Activated naive CD4-positive, alpha-beta T cell treated with anti-CD3 and anti-CD28 coated beads for 36 hours (primary cell): ENCODE measurements at regions of chr14 and their contacts with region 1.

Region 1: DNA sequence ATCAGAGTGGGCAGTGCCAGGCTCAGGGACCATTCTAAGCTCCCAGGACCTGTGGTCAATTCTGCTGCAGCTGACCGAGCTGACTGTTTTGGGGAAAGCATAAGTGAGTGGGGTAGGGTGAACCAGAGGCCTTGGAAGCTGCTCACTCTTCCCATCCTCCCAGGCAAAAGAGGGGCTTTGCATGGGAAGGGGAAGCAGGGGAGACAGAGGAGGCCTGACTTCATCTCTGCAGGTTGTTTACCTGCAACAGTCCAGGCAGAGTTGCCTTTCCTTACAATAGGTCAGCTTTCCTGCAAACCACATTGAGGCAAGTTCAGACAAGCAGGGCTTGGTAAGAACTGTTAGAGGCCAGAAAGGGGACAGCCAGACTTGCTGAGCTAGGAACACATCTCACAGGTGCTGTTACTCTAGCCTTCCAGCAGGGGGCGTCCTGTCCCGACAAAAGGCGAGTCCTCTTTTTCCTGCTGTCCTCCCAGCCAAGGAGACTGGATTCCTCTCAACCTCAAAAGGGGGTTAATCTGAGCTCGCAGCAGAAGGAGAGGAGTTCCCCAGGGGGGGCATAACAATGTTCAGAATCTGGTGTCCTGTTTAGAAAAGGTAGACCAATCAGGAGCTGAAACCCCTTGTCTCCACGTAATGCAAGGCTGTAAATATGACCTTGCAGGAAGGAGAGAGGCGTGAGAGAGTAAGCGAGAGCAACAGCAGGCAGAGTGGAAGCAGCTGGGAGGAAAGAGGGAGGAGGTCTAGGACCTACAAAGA is 4.3 kb upstream of the DHRS2 start:
- DNase-seq: peak; percentile 82
- H3K4me3 Mint-ChIP-seq: peak overlapping the region; percentile 35
- H3K27ac Mint-ChIP-seq: no peak overlapping the region
- H3K4me1 Mint-ChIP-seq: peaks cover 5% of the 10 kb centered on the region
- H3K27me3 Mint-ChIP-seq: no peaks in the 10 kb centered on the region

Region 2: GRCh38 chr14:22570132-22570949 is 1061.5 kb before region 1 on chr14:
- CTCF ChIA-PET with region 1: no interaction called
- intact Hi-C with region 1: no loop called
- DNase-seq: peak; percentile 93
- H3K4me3 Mint-ChIP-seq: peak overlapping the region; percentile 85
- H3K27ac Mint-ChIP-seq: peak overlapping the region; percentile 97
- H3K4me1 Mint-ChIP-seq: peaks cover 68% of the 10 kb centered on the region
- H3K27me3 Mint-ChIP-seq: no peaks in the 10 kb centered on the region

Region 3: DNA sequence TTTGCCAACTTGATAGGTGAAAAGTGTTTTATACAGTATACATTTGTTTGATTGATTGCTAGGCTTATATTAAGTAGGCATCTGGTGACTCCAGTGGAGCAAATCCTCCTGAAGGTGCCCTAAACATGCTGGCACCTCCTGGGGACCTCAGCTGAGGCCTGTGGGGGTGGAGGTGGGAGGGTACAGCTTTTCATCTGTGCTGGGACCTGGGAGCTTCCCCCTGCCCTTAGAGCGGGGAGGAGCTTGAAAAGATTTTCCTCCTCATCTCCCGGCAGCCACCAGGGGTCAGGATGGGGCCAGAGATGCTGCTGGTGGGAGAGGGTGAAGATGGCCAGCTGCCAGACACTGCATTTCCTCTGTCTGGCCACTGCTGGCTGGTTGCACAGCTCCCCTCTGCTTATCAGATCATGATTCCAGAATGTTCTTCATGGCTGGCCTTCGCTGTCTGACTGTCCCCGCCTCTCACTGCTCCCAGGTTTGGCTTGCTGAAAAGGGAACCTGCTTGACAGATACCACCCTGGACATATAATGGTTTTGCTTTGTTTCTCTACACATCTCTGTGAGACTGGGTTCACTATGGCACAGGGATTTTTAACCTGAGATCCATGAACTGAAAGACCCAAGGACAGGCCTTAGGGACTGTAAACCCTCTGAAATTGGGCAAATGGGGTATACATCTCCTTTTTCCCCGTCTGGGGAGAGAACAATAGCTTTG is 42.8 kb before region 1 on chr14:
- CTCF ChIA-PET with region 1: interaction called, 61 read pairs
- intact Hi-C with region 1: loop called (anchors 1 kb)
- DNase-seq: peak; percentile 91
- H3K4me3 Mint-ChIP-seq: no peak overlapping the region
- H3K27ac Mint-ChIP-seq: no peak overlapping the region
- H3K4me1 Mint-ChIP-seq: peaks cover 3% of the 10 kb centered on the region
- H3K27me3 Mint-ChIP-seq: peaks cover 15% of the 10 kb centered on the region

Region 4: DNA sequence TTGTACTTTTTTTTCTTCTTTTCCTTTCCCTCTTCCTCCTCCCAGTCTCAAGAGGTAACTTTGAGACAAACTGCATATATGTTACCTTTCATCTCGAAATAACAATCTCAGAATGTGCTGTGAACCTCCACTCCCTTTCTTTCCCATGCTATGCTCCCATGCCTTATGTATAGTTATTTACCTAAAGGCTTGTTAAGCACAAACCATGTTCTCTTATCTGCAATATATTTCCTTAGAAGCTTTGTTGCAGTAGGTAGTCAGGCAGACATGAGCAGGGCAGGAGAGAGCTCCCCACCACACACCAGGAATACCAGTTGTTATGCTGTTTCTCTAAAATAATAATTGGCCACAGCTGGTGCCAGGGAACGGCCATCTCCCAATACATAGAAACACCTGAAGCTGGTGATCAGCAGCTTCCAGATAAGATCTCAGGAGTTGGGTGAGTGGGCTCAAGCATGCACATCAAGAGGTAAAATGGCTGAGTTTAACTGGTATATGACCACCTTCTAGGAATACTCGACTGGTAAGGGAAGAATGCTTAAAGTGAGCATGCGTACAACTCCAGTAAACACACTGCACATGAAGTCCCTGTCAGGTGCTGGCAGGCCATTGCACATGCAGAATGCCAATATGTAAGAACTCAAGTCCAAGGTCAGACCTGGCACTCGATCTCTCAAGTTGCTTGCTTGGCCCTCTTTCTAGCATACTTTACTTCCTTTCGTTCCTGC is 10.5 kb before region 1 on chr14:
- CTCF ChIA-PET with region 1: interaction called, 69 read pairs
- intact Hi-C with region 1: no loop called
- DNase-seq: no peak
- H3K4me3 Mint-ChIP-seq: no peak overlapping the region
- H3K27ac Mint-ChIP-seq: no peak overlapping the region
- H3K4me1 Mint-ChIP-seq: no peaks in the 10 kb centered on the region
- H3K27me3 Mint-ChIP-seq: peaks cover 3% of the 10 kb centered on the region

Region 5: GRCh38 chr14:23660290-23661226 is 28.7 kb after region 1 on chr14:
- CTCF ChIA-PET with region 1: interaction called, 17 read pairs
- intact Hi-C with region 1: no loop called
- DNase-seq: no peak
- H3K4me3 Mint-ChIP-seq: no peak overlapping the region
- H3K27ac Mint-ChIP-seq: no peak overlapping the region
- H3K4me1 Mint-ChIP-seq: no peaks in the 10 kb centered on the region
- H3K27me3 Mint-ChIP-seq: no peaks in the 10 kb centered on the region

Region 6: GRCh38 chr14:23910101-23910875 is 278.4 kb after region 1 on chr14:
- CTCF ChIA-PET with region 1: interaction called, 21 read pairs
- intact Hi-C with region 1: no loop called
- DNase-seq: peak; percentile 44
- H3K4me3 Mint-ChIP-seq: no peak overlapping the region
- H3K27ac Mint-ChIP-seq: no peak overlapping the region
- H3K4me1 Mint-ChIP-seq: no peaks in the 10 kb centered on the region
- H3K27me3 Mint-ChIP-seq: peaks cover 7% of the 10 kb centered on the region

Region 7: DNA sequence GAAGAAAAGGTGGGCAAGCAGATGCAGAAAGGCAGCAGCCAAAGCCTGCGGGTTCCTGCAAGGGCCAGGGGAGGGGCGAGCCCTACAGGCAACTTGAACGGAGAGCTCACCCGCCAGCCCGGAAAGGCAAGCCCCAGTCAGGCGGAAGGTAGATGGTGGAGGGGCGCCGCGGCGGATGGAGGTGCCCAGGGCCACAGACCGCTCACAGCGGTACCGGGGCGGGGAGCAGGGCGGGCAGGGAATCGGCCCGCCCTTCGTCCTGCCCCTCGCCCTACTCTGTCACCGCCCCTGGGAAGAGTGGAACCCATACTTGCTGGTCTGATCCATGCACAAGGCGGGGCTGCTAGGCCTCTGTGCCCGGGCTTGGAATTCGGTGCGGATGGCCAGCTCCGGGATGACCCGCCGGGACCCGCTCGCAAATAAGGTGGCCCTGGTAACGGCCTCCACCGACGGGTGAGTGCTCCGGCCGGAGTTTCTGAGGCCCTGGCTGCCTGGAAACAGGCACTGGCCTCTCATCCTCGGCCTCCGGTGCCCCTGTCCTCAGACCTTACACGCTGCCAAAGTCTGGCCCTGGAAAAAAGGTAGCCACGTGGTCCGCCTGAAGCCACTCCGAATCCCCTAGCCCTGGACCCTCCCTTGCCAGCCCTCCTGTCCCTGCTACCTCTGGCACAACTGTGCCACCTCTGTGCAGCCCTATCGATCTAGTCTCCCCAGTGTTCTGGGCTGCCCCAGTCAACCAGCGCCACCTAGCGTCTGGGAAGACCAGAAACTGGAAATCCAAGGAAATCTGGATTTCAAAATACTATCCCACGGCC is 321.8 kb after region 1 on chr14 and contains the start of gene DHRS4:
- CTCF ChIA-PET with region 1: no interaction called
- intact Hi-C with region 1: loop called (anchors 1 kb)
- DNase-seq: peak; percentile 87
- H3K4me3 Mint-ChIP-seq: peak within 1 kb of the TSS; percentile 99
- H3K27ac Mint-ChIP-seq: peak within 1 kb of the TSS; percentile 94
- H3K4me1 Mint-ChIP-seq: peaks cover 22% of the 10 kb centered on the region
- H3K27me3 Mint-ChIP-seq: no peaks in the 10 kb centered on the region
- total RNA-seq, gene DHRS4: 22.8 to 24.0 TPM